ENCODE measurements at regions of chrX and their contacts with region 1.

Region 1: GRCh38 chrX:152632445-152633097 is 5.1 kb upstream of the GABRQ start:
- DNase-seq: peak; percentile 67

Region 2: GRCh38 chrX:151753313-151754041 is 879.1 kb before region 1 on chrX:
- in situ Hi-C with region 1: loop called (anchors 25 kb)
- DNase-seq: peak; percentile 51

Region 3: GRCh38 chrX:152177497-152178269 is 454.9 kb before region 1 on chrX:
- in situ Hi-C with region 1: no loop called
- DNase-seq: no peak

Region 4: DNA sequence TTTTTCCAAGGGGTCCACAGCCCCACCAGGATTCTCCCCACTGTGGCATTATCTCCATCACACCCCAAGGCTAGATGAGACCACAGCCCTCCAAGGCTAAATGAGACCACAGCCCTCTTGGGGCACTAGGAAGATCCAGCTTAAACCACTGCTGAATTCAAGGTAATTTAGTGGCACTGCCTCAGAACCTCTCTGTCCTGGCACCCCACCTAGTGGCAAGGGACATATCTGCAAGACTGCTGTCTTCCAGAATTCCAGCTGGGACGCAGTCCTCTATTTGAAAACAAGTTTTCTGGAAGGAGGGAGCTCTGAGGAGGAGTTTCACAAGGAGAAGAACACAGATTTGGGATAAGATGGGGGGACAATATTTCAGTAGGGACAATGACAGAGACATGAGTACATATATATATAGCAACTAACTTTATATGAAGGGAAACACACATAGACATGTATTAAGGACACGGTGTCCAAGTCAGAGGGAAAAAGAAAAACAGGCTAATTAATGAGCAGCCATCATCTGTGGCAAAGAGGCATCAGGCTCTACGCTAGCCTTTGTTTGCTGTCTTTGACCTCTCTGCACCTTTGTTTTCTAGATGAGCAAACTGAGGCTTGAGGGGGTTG is 188.7 kb after region 1 on chrX:
- in situ Hi-C with region 1: loop called (anchors 25 kb)
- DNase-seq: peak; percentile 47